WTC11 (cell line): ENCODE measurements at regions of chr3 and their contacts with region 1.

Region 1: DNA sequence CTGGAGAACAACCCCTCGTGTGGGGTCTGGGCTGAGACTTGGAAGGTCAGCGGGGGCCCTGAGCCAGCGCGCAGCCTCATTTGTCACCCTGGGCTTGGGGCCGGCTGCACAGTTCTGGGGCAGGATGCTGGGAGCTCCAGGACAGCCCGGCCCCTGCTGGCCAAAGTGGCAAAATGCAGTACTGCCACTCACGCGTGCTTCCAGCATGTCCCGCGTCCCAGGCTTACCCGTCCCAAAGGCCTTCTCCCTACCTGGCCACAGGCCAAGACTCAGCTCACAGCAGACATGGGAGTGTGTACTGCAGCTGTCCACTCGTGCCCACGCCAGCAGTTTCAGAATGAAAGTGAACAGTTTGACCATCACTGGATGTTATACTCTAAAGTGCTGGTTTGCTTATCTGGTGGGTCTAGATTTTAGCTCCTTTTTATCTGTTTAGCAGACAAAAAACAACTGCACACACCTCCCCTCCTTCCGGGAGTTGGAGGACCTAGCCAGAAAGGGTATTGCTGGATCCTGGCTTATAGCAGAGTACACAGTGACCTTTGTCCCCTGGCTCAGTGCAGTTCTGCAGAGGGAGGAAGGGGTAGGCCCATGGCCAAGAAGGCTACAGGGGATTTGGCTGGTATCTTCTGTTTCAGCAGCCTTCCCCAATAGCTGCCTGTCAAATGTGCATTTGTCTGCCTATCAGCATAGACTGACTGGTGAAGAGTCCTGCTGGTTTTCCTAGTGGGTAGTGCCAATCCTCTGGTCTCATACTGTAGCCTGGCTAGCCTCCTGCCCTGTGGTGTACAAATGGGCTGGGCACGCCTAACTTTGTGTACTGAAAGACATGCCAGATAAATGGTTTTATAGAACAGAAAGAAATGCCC is 23.2 kb upstream of the IP6K2 start:
- DNase-seq: peak; percentile 90
- ATAC-seq: peak; percentile 99
- H3K4me3 Mint-ChIP-seq: no peak overlapping the region
- H3K27ac Mint-ChIP-seq: no peak overlapping the region
- H3K4me1 Mint-ChIP-seq: no peaks in the 10 kb centered on the region
- H3K27me3 Mint-ChIP-seq: no peaks in the 10 kb centered on the region; the same call in 1 of the 2 replicates
- CTCF ChIP-seq: peak; percentile 77

Region 2: DNA sequence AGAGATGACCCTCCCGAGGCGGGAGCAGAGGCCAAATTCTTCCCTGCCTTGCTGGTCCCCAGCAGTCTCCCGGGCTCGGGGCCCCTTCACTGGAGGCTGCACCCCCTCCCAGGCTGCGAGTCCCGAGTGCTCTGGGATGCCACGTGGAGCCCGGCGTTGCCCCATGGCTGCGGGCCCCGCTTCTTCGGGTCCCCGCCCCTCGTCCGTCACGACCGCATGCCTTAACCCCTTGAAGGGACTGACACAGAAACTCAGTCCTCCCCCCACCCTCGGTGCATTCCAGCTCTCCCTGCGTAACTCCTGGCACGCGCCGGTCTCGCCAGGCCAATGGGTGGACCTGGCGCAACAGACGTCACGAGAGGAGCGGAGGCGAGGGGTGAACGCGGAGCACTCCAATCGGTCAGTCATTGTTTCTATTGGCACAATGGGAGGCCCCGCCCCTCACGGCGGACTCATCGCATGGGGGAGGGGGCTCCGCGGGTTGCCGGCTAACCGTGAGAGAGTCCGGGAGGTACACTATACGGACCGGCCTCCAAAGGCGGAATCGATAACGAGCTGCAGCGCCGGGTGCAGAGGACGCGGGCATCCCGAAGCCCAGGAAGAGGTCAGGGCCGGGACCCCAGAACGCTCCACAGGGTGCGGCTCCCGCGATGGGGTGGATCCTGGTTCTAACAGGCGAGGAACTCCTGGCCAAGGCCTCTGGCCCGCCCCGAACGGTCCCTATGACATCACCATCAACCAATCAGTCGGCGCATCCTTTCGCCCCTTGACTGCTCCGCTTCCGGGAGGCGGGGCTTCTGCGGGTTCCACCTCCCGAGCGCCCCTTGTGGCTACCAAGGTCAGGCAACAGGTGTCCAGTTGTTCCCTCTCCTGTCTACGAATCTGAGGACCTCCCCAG is 76.5 kb before region 1 on chr3:
- CTCF ChIA-PET with region 1: interaction called, 10 read pairs
- POLR2A ChIA-PET with region 1: no interaction called
- DNase-seq: peak; percentile 99
- ATAC-seq: peak; percentile 79
- H3K4me3 Mint-ChIP-seq: peak overlapping the region; percentile 88
- H3K27ac Mint-ChIP-seq: peak overlapping the region; percentile 100
- H3K4me1 Mint-ChIP-seq: peaks cover 14% of the 10 kb centered on the region
- H3K27me3 Mint-ChIP-seq: no peaks in the 10 kb centered on the region
- CTCF ChIP-seq: peak; percentile 64; the same call in 1 of the 2 replicates

Region 3: GRCh38 chr3:48716982-48717746 is 23.0 kb before region 1 on chr3 and contains the start of gene IP6K2:
- CTCF ChIA-PET with region 1: interaction called, 13 read pairs
- POLR2A ChIA-PET with region 1: interaction called, 11 read pairs
- DNase-seq: peak; percentile 100
- ATAC-seq: peak; percentile 98
- H3K4me3 Mint-ChIP-seq: peak within 1 kb of the TSS; percentile 98
- H3K27ac Mint-ChIP-seq: peak within 1 kb of the TSS; percentile 99
- H3K4me1 Mint-ChIP-seq: peaks cover 30% of the 10 kb centered on the region
- H3K27me3 Mint-ChIP-seq: peaks cover 14% of the 10 kb centered on the region
- CTCF ChIP-seq: no peak
- total RNA-seq, gene IP6K2: 113 to 123 TPM (median 114 TPM) in 3 replicates

Region 4: GRCh38 chr3:48756640-48757039 is 16.5 kb after region 1 on chr3:
- CTCF ChIA-PET with region 1: interaction called, 26 read pairs
- POLR2A ChIA-PET with region 1: no interaction called
- DNase-seq: no peak
- ATAC-seq: no peak
- H3K4me3 Mint-ChIP-seq: no peak overlapping the region
- H3K27ac Mint-ChIP-seq: no peak overlapping the region
- H3K4me1 Mint-ChIP-seq: no peaks in the 10 kb centered on the region
- H3K27me3 Mint-ChIP-seq: no peaks in the 10 kb centered on the region
- CTCF ChIP-seq: no peak

Region 5: GRCh38 chr3:48820612-48821324 is 80.6 kb after region 1 on chr3:
- CTCF ChIA-PET with region 1: interaction called, 10 read pairs
- POLR2A ChIA-PET with region 1: no interaction called
- DNase-seq: no peak
- ATAC-seq: no peak
- H3K4me3 Mint-ChIP-seq: no peak overlapping the region
- H3K27ac Mint-ChIP-seq: peak overlapping the region; percentile 33
- H3K4me1 Mint-ChIP-seq: peaks cover 20% of the 10 kb centered on the region
- H3K27me3 Mint-ChIP-seq: no peaks in the 10 kb centered on the region
- CTCF ChIP-seq: no peak

Region 6: DNA sequence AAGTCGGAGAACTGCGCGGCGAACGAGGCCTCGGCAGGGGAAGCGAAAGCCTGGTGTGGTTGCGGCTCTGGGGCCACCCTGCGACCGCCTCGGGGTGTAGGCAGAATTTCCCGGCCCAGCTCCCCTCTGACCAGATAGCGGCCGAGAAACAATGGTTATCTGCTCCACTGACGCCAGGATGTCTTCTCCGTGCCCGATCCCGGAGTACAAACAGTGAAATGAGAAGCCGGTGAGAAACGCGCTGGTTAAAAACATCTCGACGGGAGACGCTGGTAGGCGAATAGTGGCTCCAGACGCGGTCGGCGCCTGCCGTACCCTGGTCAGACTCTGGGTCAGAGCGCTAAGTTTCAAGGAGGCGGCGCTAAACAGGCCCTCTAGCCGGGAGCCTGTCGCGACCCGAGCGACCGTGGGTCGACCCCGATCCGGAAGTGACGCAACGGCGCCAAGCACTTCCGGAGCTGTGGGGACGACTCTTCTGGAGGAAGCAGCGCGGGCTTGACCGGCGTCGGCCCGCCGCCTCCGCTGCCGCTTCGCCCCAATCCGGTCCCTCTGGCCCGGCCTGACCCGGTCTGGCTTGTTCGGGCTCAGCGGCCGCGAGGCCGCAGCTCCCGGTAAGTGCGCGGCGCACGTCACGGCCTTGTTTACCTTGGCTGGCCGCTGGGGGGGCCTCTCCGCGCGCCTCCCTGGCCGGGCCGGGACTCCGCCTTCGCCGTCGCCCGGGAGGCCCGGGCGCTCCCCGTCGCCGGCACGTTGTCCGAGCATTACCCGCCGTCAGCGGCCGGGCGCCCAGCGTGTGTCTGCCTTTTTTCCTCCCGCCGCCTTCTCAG is 178.4 kb after region 1 on chr3 and contains the start of gene ARIH2:
- CTCF ChIA-PET with region 1: interaction called, 11 read pairs
- POLR2A ChIA-PET with region 1: interaction called, 5 read pairs
- DNase-seq: peak; percentile 88
- ATAC-seq: peak; percentile 93
- H3K4me3 Mint-ChIP-seq: peak within 1 kb of the TSS; percentile 94
- H3K27ac Mint-ChIP-seq: peak within 1 kb of the TSS; percentile 98
- H3K4me1 Mint-ChIP-seq: peaks cover 7% of the 10 kb centered on the region
- H3K27me3 Mint-ChIP-seq: no peaks in the 10 kb centered on the region
- CTCF ChIP-seq: no peak
- total RNA-seq, gene ARIH2: 86.2 to 134 TPM (median 95.1 TPM) in 3 replicates

Region 7: GRCh38 chr3:48989796-48990635 is 249.8 kb after region 1 on chr3 and contains the start of gene P4HTM:
- CTCF ChIA-PET with region 1: interaction called, 12 read pairs
- POLR2A ChIA-PET with region 1: no interaction called
- DNase-seq: peak; percentile 84
- ATAC-seq: peak; percentile 74
- H3K4me3 Mint-ChIP-seq: peak within 1 kb of the TSS; percentile 89
- H3K27ac Mint-ChIP-seq: peak within 1 kb of the TSS; percentile 92
- H3K4me1 Mint-ChIP-seq: peaks cover 23% of the 10 kb centered on the region
- H3K27me3 Mint-ChIP-seq: no peaks in the 10 kb centered on the region
- CTCF ChIP-seq: no peak
- total RNA-seq, gene P4HTM: 21.9 to 28.8 TPM (median 28.2 TPM) in 3 replicates